GM12878 (cell line): ENCODE measurements at regions of chr2 and their contacts with region 1.

Region 1: GRCh38 chr2:135004005-135004746 is 43.1 kb downstream of the MAP3K19 start:
- DNase-seq: peak; percentile 17
- ATAC-seq: peak; percentile 100
- H3K4me3 ChIP-seq: no peak overlapping the region
- H3K27ac ChIP-seq: no peak overlapping the region
- H3K4me1 ChIP-seq: no peaks in the 10 kb centered on the region
- H3K27me3 ChIP-seq: peaks cover 0 to 2% of the 10 kb centered on the region in 2 experiments; a peak in 1 of 4 replicates
- CTCF ChIP-seq: peak; percentile 94 to 98 (median 96); a peak in 5 of 6 replicates
- EP300 ChIP-seq: no peak
- POLR2A ChIP-seq: no peak
- RAD21 ChIP-seq: peak; percentile 95

Region 2: GRCh38 chr2:134988994-134989605 is 15.1 kb before region 1 on chr2:
- CTCF ChIA-PET with region 1: interaction called, 33 read pairs
- POLR2A ChIA-PET with region 1: no interaction called
- RAD21 ChIA-PET with region 1: interaction called, 15 read pairs
- SMC1A ChIA-PET with region 1: interaction called, 23 read pairs
- in situ Hi-C with region 1: no loop called
- intact Hi-C with region 1: no loop called
- DNase-seq: no peak
- ATAC-seq: peak; percentile 75
- H3K4me3 ChIP-seq: no peak overlapping the region
- H3K27ac ChIP-seq: no peak overlapping the region
- H3K4me1 ChIP-seq: no peaks in the 10 kb centered on the region
- H3K27me3 ChIP-seq: no peaks in the 10 kb centered on the region
- CTCF ChIP-seq: peak; percentile 26 to 47 (median 32); a peak in 5 of 6 replicates
- EP300 ChIP-seq: no peak
- POLR2A ChIP-seq: no peak
- RAD21 ChIP-seq: peak; percentile 59

Region 3: GRCh38 chr2:135043345-135043744 is 39.2 kb after region 1 on chr2:
- CTCF ChIA-PET with region 1: interaction called, 8 read pairs
- POLR2A ChIA-PET with region 1: no interaction called
- RAD21 ChIA-PET with region 1: interaction called, 3 read pairs
- SMC1A ChIA-PET with region 1: interaction called, 5 read pairs
- in situ Hi-C with region 1: no loop called
- intact Hi-C with region 1: loop called (anchors 2 kb)
- DNase-seq: no peak
- ATAC-seq: peak; percentile 63
- H3K4me3 ChIP-seq: no peak overlapping the region
- H3K27ac ChIP-seq: no peak overlapping the region
- H3K4me1 ChIP-seq: no peaks in the 10 kb centered on the region
- H3K27me3 ChIP-seq: no peaks in the 10 kb centered on the region; a peak in 1 of 4 replicates
- CTCF ChIP-seq: peak; percentile 28 to 58 (median 55)
- EP300 ChIP-seq: no peak
- POLR2A ChIP-seq: no peak
- RAD21 ChIP-seq: 0 out of 2 replicates have a peak, but pooled peaks have one; percentile 17

Region 4: DNA sequence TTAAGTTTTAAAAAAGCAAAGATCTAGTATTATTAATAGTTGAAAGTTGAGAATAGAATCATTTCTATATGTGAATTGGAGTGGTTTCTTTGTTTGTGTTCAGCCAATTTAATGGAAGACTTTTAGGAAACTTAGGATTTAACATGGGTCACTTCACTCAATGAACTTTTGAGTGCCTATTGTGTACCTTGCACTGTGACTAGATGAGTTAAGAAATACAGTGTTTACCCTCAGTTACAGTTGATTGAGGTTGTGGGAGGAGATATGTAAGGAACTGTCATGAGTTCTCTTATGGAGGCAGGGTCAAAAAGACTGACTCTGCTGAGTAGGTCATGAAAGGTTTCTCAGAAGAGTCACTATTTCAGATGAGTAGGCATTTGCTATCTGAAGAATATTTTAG is 146.5 kb after region 1 on chr2:
- CTCF ChIA-PET with region 1: interaction called, 3 read pairs
- POLR2A ChIA-PET with region 1: no interaction called
- RAD21 ChIA-PET with region 1: no interaction called
- SMC1A ChIA-PET with region 1: no interaction called
- in situ Hi-C with region 1: no loop called
- intact Hi-C with region 1: loop called (anchors 10 kb)
- DNase-seq: no peak
- ATAC-seq: no peak
- H3K4me3 ChIP-seq: no peak overlapping the region
- H3K27ac ChIP-seq: no peak overlapping the region
- H3K4me1 ChIP-seq: peaks cover 8% of the 10 kb centered on the region
- H3K27me3 ChIP-seq: no peaks in the 10 kb centered on the region
- CTCF ChIP-seq: no peak
- EP300 ChIP-seq: no peak
- POLR2A ChIP-seq: no peak
- RAD21 ChIP-seq: no peak

Region 5: DNA sequence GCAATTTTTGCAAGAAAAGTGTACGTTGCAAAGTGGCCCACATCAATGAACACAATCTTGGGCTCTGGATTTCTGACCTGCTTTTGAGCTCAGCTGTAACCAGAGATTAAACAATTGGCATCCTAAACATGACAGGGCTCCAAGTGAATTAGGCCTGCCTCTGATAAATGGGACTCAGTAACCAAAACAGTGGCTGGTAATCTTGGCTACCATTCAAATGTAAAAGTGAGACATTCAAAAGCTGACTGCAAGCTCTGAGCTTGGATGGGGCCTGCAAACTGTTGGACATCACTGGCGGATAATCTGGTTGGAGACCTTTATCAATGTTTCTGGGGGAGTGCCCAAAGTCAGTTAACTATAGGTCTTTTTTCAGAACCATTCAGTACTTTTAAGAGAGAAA is 208.6 kb after region 1 on chr2:
- CTCF ChIA-PET with region 1: no interaction called
- POLR2A ChIA-PET with region 1: no interaction called
- RAD21 ChIA-PET with region 1: no interaction called
- SMC1A ChIA-PET with region 1: no interaction called
- in situ Hi-C with region 1: no loop called
- intact Hi-C with region 1: loop called (anchors 10 kb)
- DNase-seq: no peak
- ATAC-seq: no peak
- H3K4me3 ChIP-seq: no peak overlapping the region
- H3K27ac ChIP-seq: no peak overlapping the region
- H3K4me1 ChIP-seq: no peaks in the 10 kb centered on the region
- H3K27me3 ChIP-seq: no peaks in the 10 kb centered on the region
- CTCF ChIP-seq: no peak
- EP300 ChIP-seq: no peak
- POLR2A ChIP-seq: no peak
- RAD21 ChIP-seq: no peak

Region 6: GRCh38 chr2:135473567-135473966 is 469.4 kb after region 1 on chr2:
- CTCF ChIA-PET with region 1: interaction called, 18 read pairs
- POLR2A ChIA-PET with region 1: no interaction called
- RAD21 ChIA-PET with region 1: no interaction called
- SMC1A ChIA-PET with region 1: interaction called, 12 read pairs
- in situ Hi-C with region 1: no loop called
- intact Hi-C with region 1: no loop called
- DNase-seq: peak; percentile 5
- ATAC-seq: peak; percentile 86
- H3K4me3 ChIP-seq: no peak overlapping the region
- H3K27ac ChIP-seq: no peak overlapping the region
- H3K4me1 ChIP-seq: no peaks in the 10 kb centered on the region
- H3K27me3 ChIP-seq: no peaks in the 10 kb centered on the region
- CTCF ChIP-seq: peak; percentile 52 to 76 (median 62)
- EP300 ChIP-seq: no peak
- POLR2A ChIP-seq: no peak
- RAD21 ChIP-seq: peak; percentile 85

Region 7: DNA sequence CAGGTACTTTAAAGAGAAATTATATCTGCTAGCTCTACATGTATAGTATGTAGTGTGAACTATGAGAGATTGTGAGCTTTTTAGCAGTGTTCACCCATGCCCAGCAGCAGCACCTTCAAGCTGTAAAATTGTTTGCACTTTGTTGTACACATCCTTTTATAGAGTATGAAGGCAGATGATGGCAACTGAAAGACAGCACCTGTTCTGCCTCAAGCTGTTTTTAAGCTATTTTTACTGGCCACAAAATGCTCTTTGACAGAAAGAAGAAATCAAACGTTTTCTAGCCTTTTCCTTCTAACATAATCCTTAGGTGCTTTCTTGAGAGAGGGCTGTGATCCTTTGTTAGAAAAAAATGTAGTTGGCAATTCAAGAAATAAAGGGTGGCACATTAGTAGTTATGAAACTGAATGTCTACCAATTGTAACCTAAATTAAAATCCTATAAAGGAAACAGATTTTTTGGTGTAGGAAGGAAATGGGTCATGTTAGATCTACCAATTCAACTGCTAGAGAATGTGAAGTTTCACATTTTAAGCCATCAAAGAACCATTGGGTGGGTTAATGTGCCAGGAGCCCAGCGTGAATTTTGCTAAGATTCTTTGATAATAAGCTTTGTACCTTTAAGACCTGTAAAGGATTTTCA is 586.6 kb after region 1 on chr2:
- CTCF ChIA-PET with region 1: no interaction called
- POLR2A ChIA-PET with region 1: no interaction called
- RAD21 ChIA-PET with region 1: no interaction called
- SMC1A ChIA-PET with region 1: no interaction called
- in situ Hi-C with region 1: no loop called
- intact Hi-C with region 1: loop called (anchors 10 kb)
- DNase-seq: no peak
- ATAC-seq: no peak
- H3K4me3 ChIP-seq: no peak overlapping the region
- H3K27ac ChIP-seq: no peak overlapping the region
- H3K4me1 ChIP-seq: no peaks in the 10 kb centered on the region
- H3K27me3 ChIP-seq: no peaks in the 10 kb centered on the region
- CTCF ChIP-seq: no peak
- EP300 ChIP-seq: no peak
- POLR2A ChIP-seq: no peak
- RAD21 ChIP-seq: no peak